Activated CD8-positive, alpha-beta T cell treated with anti-CD3 and anti-CD28 coated beads for 36 hours (primary cell): ENCODE measurements at regions of chr16 and their contacts with region 1.

Region 1: GRCh38 chr16:70380861-70381603 is 34.3 kb downstream of the DDX19A start:
- DNase-seq: peak; percentile 98
- ATAC-seq: peak; percentile 92
- H3K4me3 Mint-ChIP-seq: peak overlapping the region; percentile 84
- H3K27ac Mint-ChIP-seq: peak overlapping the region; percentile 98
- H3K4me1 Mint-ChIP-seq: peaks cover 9% of the 10 kb centered on the region
- H3K27me3 Mint-ChIP-seq: no peaks in the 10 kb centered on the region
- CTCF ChIP-seq: no peak

Region 2: DNA sequence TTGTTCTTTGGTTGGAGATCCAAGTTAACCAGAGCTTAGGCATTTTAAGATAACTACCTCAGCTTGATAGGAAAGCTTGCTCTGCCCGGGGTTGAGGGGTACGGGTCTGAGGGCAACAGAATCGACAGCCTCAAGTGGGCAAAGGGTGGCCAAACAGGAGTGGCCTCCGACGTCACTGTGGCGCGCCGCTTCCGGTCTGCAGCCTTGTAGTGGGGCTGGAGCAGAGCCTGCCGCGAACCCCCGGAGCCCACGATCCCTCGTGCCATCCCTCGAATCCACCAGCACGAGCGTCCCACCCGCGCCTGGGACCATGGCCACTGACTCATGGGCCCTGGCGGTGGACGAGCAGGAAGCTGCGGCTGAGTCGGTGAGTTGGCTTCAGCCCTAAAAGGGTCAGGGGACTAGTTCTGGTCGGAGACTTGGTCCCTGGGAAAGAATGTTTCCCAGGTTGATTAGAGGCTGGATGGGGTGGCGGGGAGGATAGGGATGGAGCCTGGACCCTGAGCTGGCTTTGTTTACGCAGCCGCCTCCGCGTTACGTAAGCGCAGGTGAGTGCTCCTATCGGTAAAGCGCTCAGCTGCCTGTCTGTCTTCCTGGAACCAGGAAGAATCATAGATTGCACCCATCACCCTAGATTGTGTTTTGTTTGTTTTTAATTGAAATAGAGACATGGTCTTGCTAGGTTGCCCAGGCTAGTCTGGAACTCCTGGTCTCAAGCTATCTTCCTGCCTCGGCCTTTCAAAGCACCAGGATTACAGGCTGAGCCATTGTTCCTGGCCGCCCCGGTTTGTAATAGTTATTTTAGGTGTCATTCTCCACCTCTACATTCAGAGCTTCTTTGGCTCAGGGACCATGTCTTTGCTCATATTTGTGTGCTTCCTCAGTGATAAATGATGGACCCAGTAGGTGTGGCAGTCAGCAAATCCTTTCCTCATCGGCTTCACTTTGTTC is 81.8 kb before region 1 on chr16 and contains the start of gene DDX19B:
- CTCF ChIA-PET with region 1: no interaction called
- POLR2A ChIA-PET with region 1: interaction called, 14 read pairs
- intact Hi-C with region 1: no loop called
- DNase-seq: peak; percentile 83
- ATAC-seq: peak; percentile 89
- H3K4me3 Mint-ChIP-seq: peak within 1 kb of the TSS; percentile 93
- H3K27ac Mint-ChIP-seq: peak within 1 kb of the TSS; percentile 97
- H3K4me1 Mint-ChIP-seq: peaks cover 37% of the 10 kb centered on the region
- H3K27me3 Mint-ChIP-seq: no peaks in the 10 kb centered on the region
- CTCF ChIP-seq: no peak
- total RNA-seq, gene DDX19B: 34.8 to 42.2 TPM

Region 3: GRCh38 chr16:70364399-70364798 is 16.6 kb before region 1 on chr16:
- CTCF ChIA-PET with region 1: interaction called, 9 read pairs
- POLR2A ChIA-PET with region 1: interaction called, 11 read pairs
- intact Hi-C with region 1: no loop called
- DNase-seq: no peak
- ATAC-seq: no peak
- H3K4me3 Mint-ChIP-seq: no peak overlapping the region
- H3K27ac Mint-ChIP-seq: no peak overlapping the region
- H3K4me1 Mint-ChIP-seq: no peaks in the 10 kb centered on the region
- H3K27me3 Mint-ChIP-seq: no peaks in the 10 kb centered on the region
- CTCF ChIP-seq: no peak

Region 4: DNA sequence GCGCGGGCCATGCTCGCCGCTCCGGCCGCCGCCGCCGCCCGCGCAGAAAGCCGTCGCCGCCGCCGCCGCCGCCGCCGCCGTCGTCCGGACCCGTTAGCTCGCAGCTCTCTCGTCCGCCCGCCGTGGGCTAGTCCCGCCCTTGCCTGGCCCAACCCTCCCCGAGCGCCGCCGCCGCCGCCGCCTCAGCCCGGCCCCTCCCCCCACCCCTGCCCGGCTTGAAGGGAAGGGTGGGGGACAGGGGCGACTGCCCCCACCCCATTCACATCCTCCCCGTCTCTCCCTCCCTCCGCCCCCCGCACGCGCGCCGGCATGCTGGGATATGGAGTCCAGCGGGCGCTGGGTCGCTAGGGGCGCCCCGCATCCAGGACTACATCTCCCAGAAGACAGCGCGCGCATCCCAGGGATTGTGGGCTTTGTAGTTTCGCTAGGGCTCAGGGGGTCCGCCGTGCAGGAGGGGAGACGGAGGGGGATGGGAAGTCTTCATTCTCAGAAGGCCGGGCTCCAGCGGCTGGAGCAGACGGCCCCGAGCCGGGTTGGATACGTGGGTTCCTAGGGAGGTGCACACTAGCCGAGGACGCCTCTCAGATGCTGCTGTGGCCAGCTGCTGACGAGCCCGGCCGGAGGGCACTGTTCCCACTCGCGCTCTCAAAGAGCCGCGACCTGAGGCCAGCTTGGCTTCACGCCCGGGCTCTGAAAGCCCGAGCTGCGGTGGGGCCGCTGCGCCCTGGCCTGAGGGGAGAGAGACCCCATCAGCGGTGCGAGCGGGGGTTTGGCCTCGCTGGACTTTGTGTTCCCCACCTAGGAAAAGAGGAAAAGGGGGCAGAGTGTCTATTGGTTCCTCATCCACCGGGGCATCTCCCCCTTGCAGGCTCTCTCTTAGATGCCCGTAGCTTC is 58.2 kb after region 1 on chr16 and contains the start of gene ST3GAL2:
- CTCF ChIA-PET with region 1: interaction called, 3 read pairs
- POLR2A ChIA-PET with region 1: interaction called, 23 read pairs
- intact Hi-C with region 1: loop called (anchors 5 kb)
- DNase-seq: peak; percentile 96
- ATAC-seq: peak; percentile 97
- H3K4me3 Mint-ChIP-seq: peak within 1 kb of the TSS; percentile 95
- H3K27ac Mint-ChIP-seq: peak within 1 kb of the TSS; percentile 91
- H3K4me1 Mint-ChIP-seq: peaks cover 37% of the 10 kb centered on the region
- H3K27me3 Mint-ChIP-seq: no peaks in the 10 kb centered on the region
- CTCF ChIP-seq: no peak
- total RNA-seq, gene ST3GAL2: 13.2 to 19.0 TPM

Region 5: GRCh38 chr16:70478912-70479341 is 97.9 kb after region 1 on chr16:
- CTCF ChIA-PET with region 1: interaction called, 3 read pairs
- POLR2A ChIA-PET with region 1: interaction called, 27 read pairs
- intact Hi-C with region 1: no loop called
- DNase-seq: no peak
- ATAC-seq: no peak
- H3K4me3 Mint-ChIP-seq: no peak overlapping the region
- H3K27ac Mint-ChIP-seq: peak overlapping the region; percentile 25
- H3K4me1 Mint-ChIP-seq: peaks cover 29% of the 10 kb centered on the region
- H3K27me3 Mint-ChIP-seq: no peaks in the 10 kb centered on the region
- CTCF ChIP-seq: no peak

Region 6: GRCh38 chr16:70495425-70496182 is 114.6 kb after region 1 on chr16:
- CTCF ChIA-PET with region 1: no interaction called
- POLR2A ChIA-PET with region 1: no interaction called
- intact Hi-C with region 1: no loop called
- DNase-seq: no peak
- ATAC-seq: no peak
- H3K4me3 Mint-ChIP-seq: no peak overlapping the region
- H3K27ac Mint-ChIP-seq: no peak overlapping the region
- H3K4me1 Mint-ChIP-seq: peaks cover 17% of the 10 kb centered on the region
- H3K27me3 Mint-ChIP-seq: no peaks in the 10 kb centered on the region
- CTCF ChIP-seq: no peak